AG04449 (cell line): ENCODE measurements at regions of chr11 and their contacts with region 1.

Region 1: GRCh38 chr11:85854557-85855340 is 434 bp upstream of the CCDC83 start:
- DNase-seq: no peak
- H3K4me3 ChIP-seq: peak overlapping the region; percentile 70
- CTCF ChIP-seq: peak; percentile 72

Region 2: GRCh38 chr11:85694386-85694980 is 160.3 kb before region 1 on chr11:
- CTCF ChIA-PET with region 1: interaction called, 16 read pairs
- POLR2A ChIA-PET with region 1: no interaction called
- DNase-seq: no peak
- H3K4me3 ChIP-seq: no peak overlapping the region
- CTCF ChIP-seq: peak; percentile 56

Region 3: GRCh38 chr11:85844426-85845129 is 10.2 kb before region 1 on chr11:
- CTCF ChIA-PET with region 1: interaction called, 35 read pairs
- POLR2A ChIA-PET with region 1: no interaction called
- DNase-seq: no peak
- H3K4me3 ChIP-seq: no peak overlapping the region
- CTCF ChIP-seq: no peak

Region 4: GRCh38 chr11:86193297-86194095 is 338.7 kb after region 1 on chr11:
- CTCF ChIA-PET with region 1: interaction called, 24 read pairs
- POLR2A ChIA-PET with region 1: no interaction called
- DNase-seq: no peak
- H3K4me3 ChIP-seq: no peak overlapping the region; the same call in 1 of the 2 replicates
- CTCF ChIP-seq: peak; percentile 72

Region 5: GRCh38 chr11:86291466-86292262 is 436.9 kb after region 1 on chr11:
- CTCF ChIA-PET with region 1: interaction called, 32 read pairs
- POLR2A ChIA-PET with region 1: interaction called, 3 read pairs
- DNase-seq: no peak
- H3K4me3 ChIP-seq: no peak overlapping the region
- CTCF ChIP-seq: peak; percentile 45